ENCODE measurements at regions of chr7 and their contacts with region 1.

Region 1: GRCh38 chr7:18895456-18895855 is 222.0 kb downstream of the TWIST1 start:
- DNase-seq: peak; percentile 89
- ATAC-seq: peak; percentile 80
- H3K4me3 ChIP-seq: peak overlapping the region; percentile 64
- H3K27ac ChIP-seq: peak overlapping the region; percentile 84
- H3K4me1 ChIP-seq: peaks cover 54% of the 10 kb centered on the region
- H3K27me3 ChIP-seq: no peaks in the 10 kb centered on the region
- CTCF ChIP-seq: no peak

Region 2: GRCh38 chr7:18693406-18693805 is 202.1 kb before region 1 on chr7:
- CTCF ChIA-PET with region 1: interaction called, 5 read pairs
- POLR2A ChIA-PET with region 1: no interaction called
- intact Hi-C with region 1: loop called (anchors 10 kb)
- DNase-seq: peak; percentile 71
- ATAC-seq: peak; percentile 87
- H3K4me3 ChIP-seq: no peak overlapping the region
- H3K27ac ChIP-seq: no peak overlapping the region
- H3K4me1 ChIP-seq: no peaks in the 10 kb centered on the region
- H3K27me3 ChIP-seq: no peaks in the 10 kb centered on the region
- CTCF ChIP-seq: peak; percentile 88

Region 3: GRCh38 chr7:18706670-18707069 is 188.8 kb before region 1 on chr7:
- CTCF ChIA-PET with region 1: no interaction called
- POLR2A ChIA-PET with region 1: no interaction called
- intact Hi-C with region 1: no loop called
- DNase-seq: no peak
- ATAC-seq: no peak
- H3K4me3 ChIP-seq: no peak overlapping the region
- H3K27ac ChIP-seq: no peak overlapping the region
- H3K4me1 ChIP-seq: no peaks in the 10 kb centered on the region
- H3K27me3 ChIP-seq: no peaks in the 10 kb centered on the region
- CTCF ChIP-seq: no peak

Region 4: GRCh38 chr7:18846765-18847215 is 48.7 kb before region 1 on chr7:
- CTCF ChIA-PET with region 1: no interaction called
- POLR2A ChIA-PET with region 1: no interaction called
- intact Hi-C with region 1: loop called (anchors 5 kb)
- DNase-seq: no peak
- ATAC-seq: no peak
- H3K4me3 ChIP-seq: no peak overlapping the region
- H3K27ac ChIP-seq: no peak overlapping the region
- H3K4me1 ChIP-seq: peaks cover 25% of the 10 kb centered on the region
- H3K27me3 ChIP-seq: no peaks in the 10 kb centered on the region
- CTCF ChIP-seq: no peak

Region 5: DNA sequence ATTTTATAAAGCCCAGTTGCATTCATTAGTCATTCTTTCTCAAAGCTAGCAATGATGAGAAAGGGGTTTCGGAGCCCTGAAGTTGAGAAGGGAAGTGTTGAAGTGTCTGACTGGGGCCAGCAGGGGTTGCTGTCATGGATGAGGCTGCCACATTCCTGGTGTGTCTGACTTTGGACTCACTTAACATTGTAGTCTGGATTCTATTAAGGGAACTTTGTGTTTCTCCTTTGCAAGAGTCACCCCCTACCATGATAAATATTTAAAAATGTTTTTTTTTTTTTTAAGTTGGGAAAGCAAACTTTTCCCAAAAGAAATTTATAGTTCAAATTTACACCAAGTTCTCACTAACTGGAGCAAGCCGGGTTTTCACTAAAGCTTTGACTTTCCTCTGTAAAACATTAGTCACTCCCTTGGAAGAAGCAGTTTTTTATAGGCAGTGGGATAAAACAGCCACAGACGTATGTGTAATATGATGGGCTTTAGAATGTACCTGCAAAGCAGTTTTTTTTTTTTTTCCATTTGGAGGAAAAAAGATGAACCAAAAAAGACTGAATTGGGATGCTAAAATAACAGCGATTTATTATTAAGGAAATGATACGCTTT is 21.6 kb before region 1 on chr7:
- CTCF ChIA-PET with region 1: no interaction called
- POLR2A ChIA-PET with region 1: interaction called, 3 read pairs
- intact Hi-C with region 1: loop called (anchors 2 kb)
- DNase-seq: peak; percentile 39
- ATAC-seq: peak; percentile 74
- H3K4me3 ChIP-seq: no peak overlapping the region
- H3K27ac ChIP-seq: no peak overlapping the region
- H3K4me1 ChIP-seq: peaks cover 5% of the 10 kb centered on the region; the same call in 1 of the 2 replicates
- H3K27me3 ChIP-seq: no peaks in the 10 kb centered on the region
- CTCF ChIP-seq: peak; percentile 64

Region 6: GRCh38 chr7:18978108-18978495 is 82.6 kb after region 1 on chr7:
- CTCF ChIA-PET with region 1: no interaction called
- POLR2A ChIA-PET with region 1: no interaction called
- intact Hi-C with region 1: loop called (anchors 2 kb)
- DNase-seq: peak; percentile 94
- ATAC-seq: peak; percentile 61
- H3K4me3 ChIP-seq: peak overlapping the region; percentile 54
- H3K27ac ChIP-seq: peak overlapping the region; percentile 97
- H3K4me1 ChIP-seq: peaks cover 50% of the 10 kb centered on the region
- H3K27me3 ChIP-seq: no peaks in the 10 kb centered on the region
- CTCF ChIP-seq: no peak

Region 7: DNA sequence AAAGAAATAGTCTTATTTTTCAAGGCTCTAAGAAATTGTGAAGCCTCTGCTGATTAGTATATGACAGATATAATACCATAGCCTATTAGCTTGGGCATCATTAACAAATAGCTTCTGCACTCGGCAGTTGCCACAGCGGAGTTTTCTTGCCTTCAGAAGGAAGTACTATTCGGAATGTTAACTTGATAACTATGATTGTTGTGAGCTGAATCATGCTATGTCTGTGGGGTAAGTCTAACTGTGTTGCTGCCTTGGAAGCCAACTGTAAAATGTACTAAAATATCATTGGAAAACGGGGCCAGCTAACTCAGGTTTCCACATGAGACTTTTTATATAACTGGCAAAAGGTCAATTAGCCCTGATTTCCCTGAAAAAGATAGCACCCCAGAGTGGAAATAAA is 128.8 kb after region 1 on chr7:
- CTCF ChIA-PET with region 1: no interaction called
- POLR2A ChIA-PET with region 1: no interaction called
- intact Hi-C with region 1: loop called (anchors 5 kb)
- DNase-seq: peak; percentile 25
- ATAC-seq: 0 out of 2 replicates have a peak, but pooled peaks have one; percentile 12
- H3K4me3 ChIP-seq: no peak overlapping the region
- H3K27ac ChIP-seq: no peak overlapping the region
- H3K4me1 ChIP-seq: peaks cover 35% of the 10 kb centered on the region
- H3K27me3 ChIP-seq: no peaks in the 10 kb centered on the region
- CTCF ChIP-seq: no peak